ENCODE measurements at regions of chr3 and their contacts with region 1.

Region 1: DNA sequence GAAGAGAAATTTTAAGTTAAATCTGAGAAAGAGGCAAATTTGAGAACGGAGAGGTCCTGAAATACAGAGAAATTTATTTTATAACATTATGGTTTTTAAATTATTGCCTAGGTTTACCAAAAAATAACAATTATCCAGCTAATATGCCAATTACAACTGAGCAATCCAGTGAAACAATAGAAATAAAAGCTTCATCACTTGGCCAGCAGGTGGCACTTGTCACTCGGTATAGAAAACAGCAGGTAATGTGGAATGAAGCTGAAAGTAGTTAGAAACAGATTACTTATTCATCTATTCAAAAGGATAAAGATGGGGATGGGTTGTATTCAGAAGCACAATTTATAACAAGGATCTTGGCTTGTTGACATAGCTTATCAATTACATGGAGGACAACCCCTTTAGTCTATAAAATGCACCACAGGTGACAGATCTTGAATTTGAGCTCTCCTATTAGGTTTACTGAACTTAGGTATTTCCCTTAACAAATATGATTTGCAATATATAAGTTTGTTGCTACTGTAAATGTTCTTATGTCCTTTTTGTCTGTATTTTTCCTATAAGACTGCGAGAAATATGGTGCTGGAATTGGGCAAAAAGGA is 70.1 kb upstream of the GUCA1C start:
- DNase-seq: no peak
- ATAC-seq: no peak
- H3K4me3 ChIP-seq: no peak overlapping the region
- H3K27ac ChIP-seq: no peak overlapping the region
- H3K4me1 ChIP-seq: no peaks in the 10 kb centered on the region
- H3K27me3 ChIP-seq: no peaks in the 10 kb centered on the region
- CTCF ChIP-seq: peak; percentile 19 to 64 (median 55)
- POLR2A ChIP-seq: no peak

Region 2: GRCh38 chr3:109081746-109082510 is 58.2 kb after region 1 on chr3:
- in situ Hi-C with region 1: loop called in 3 of 4 experiments (anchors 5 to 10 kb)
- intact Hi-C with region 1: loop called (anchors 1 kb)
- DNase-seq: no peak
- ATAC-seq: peak in 1 of 2 donors; percentile 70
- H3K4me3 ChIP-seq: no peak overlapping the region
- H3K27ac ChIP-seq: no peak overlapping the region
- H3K4me1 ChIP-seq: no peaks in the 10 kb centered on the region
- H3K27me3 ChIP-seq: no peaks in the 10 kb centered on the region
- CTCF ChIP-seq: peak; percentile 21 to 72 (median 49)
- POLR2A ChIP-seq: no peak

Measured in gastrocnemius medialis (tissue), 4 donors.